ENCODE measurements at regions of chr2 and their contacts with region 1.

Region 1: GRCh38 chr2:234500394-234501006 is 3.6 kb upstream of the ARL4C start:
- DNase-seq: peak in 1 of 2 donors; percentile 43
- H3K4me3 ChIP-seq: no peak overlapping the region
- H3K27ac ChIP-seq: peak overlapping the region in 1 of 2 donors; percentile 70
- H3K4me1 ChIP-seq: no peaks in the 10 kb centered on the region
- H3K27me3 ChIP-seq: no peaks in the 10 kb centered on the region
- CTCF ChIP-seq: peak in 2 of 3 donors; percentile 31 to 37
- POLR2A ChIP-seq: no peak

Region 2: GRCh38 chr2:234528410-234529148 is 28.1 kb after region 1 on chr2:
- intact Hi-C with region 1: loop called (anchors 1 kb)
- DNase-seq: no peak
- H3K4me3 ChIP-seq: no peak overlapping the region
- H3K27ac ChIP-seq: no peak overlapping the region
- H3K4me1 ChIP-seq: no peaks in the 10 kb centered on the region
- H3K27me3 ChIP-seq: no peaks in the 10 kb centered on the region
- CTCF ChIP-seq: no peak
- POLR2A ChIP-seq: no peak

Region 3: DNA sequence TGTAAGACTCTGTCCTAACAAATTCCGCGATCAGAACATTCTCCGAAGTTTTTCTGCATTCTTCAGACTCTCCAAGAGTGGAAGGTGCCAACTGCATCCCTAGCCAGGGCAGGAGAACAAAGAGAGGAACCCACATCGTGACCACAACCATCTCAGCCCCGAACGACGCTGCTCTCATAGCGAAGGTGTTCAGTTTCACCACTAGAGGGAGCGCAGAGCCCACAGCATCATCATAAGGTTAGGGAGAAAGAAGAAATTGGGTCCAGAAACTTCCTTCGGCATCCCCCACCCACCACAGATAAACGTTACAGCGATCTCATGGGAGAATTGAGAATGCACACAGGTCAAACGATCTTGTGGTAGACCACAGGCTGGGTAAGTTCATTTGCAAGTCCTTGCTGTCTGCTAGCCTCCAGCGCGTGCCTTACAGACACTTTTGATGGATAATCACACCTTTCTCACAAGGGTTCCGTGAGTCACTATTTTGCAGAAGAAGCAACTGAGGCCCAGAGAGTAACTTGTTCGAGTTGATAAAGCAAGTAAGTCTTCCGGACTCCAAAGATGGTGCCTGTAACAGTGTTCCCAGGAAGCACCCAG is 50.1 kb after region 1 on chr2:
- intact Hi-C with region 1: no loop called
- DNase-seq: peak in 1 of 2 donors; percentile 88
- H3K4me3 ChIP-seq: no peak overlapping the region
- H3K27ac ChIP-seq: no peak overlapping the region
- H3K4me1 ChIP-seq: no peaks in the 10 kb centered on the region
- H3K27me3 ChIP-seq: no peaks in the 10 kb centered on the region
- CTCF ChIP-seq: peak; percentile 92 to 98 (median 96)
- POLR2A ChIP-seq: no peak